Activated B cell treated with CpG ODN at 0.5 μM for 24 hours (primary cell): ENCODE measurements at regions of chr6 and their contacts with region 1.

Region 1: GRCh38 chr6:131602781-131603312 is 25.2 kb downstream of the MED23 start:
- DNase-seq: no peak
- ATAC-seq: no peak
- H3K4me3 Mint-ChIP-seq: no peak overlapping the region
- H3K27ac Mint-ChIP-seq: no peak overlapping the region
- H3K4me1 Mint-ChIP-seq: no peaks in the 10 kb centered on the region
- H3K27me3 Mint-ChIP-seq: no peaks in the 10 kb centered on the region
- CTCF ChIP-seq: no peak

Region 2: GRCh38 chr6:131368198-131368911 is 234.5 kb before region 1 on chr6:
- CTCF ChIA-PET with region 1: no interaction called
- POLR2A ChIA-PET with region 1: no interaction called
- intact Hi-C with region 1: no loop called
- DNase-seq: peak; percentile 19
- ATAC-seq: peak; percentile 25
- H3K4me3 Mint-ChIP-seq: peak overlapping the region; percentile 72
- H3K27ac Mint-ChIP-seq: peak overlapping the region; percentile 85
- H3K4me1 Mint-ChIP-seq: peaks cover 45% of the 10 kb centered on the region
- H3K27me3 Mint-ChIP-seq: no peaks in the 10 kb centered on the region
- CTCF ChIP-seq: no peak

Region 3: DNA sequence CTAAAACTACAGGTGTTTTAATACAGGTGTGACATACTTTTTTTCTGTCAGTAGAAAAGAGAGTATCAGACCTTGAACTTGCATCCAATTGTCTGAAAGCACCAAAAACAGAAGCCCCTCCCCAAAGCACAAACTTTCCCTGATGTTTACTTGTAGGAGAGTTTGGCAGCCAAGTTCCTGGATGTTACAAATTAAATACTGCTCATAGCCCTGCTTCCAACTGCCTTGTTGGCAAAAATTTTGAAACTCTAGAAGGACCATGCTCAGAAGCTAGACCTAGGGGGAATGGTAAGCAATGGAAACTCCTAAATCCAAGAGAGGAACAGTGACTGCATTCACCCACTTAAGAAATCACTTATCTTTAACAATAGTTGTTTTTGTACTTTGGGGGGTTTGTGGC is 46.9 kb before region 1 on chr6:
- CTCF ChIA-PET with region 1: no interaction called
- POLR2A ChIA-PET with region 1: interaction called, 10 read pairs
- intact Hi-C with region 1: no loop called
- DNase-seq: no peak
- ATAC-seq: no peak
- H3K4me3 Mint-ChIP-seq: no peak overlapping the region
- H3K27ac Mint-ChIP-seq: no peak overlapping the region
- H3K4me1 Mint-ChIP-seq: no peaks in the 10 kb centered on the region
- H3K27me3 Mint-ChIP-seq: peaks cover 9% of the 10 kb centered on the region
- CTCF ChIP-seq: no peak

Region 4: DNA sequence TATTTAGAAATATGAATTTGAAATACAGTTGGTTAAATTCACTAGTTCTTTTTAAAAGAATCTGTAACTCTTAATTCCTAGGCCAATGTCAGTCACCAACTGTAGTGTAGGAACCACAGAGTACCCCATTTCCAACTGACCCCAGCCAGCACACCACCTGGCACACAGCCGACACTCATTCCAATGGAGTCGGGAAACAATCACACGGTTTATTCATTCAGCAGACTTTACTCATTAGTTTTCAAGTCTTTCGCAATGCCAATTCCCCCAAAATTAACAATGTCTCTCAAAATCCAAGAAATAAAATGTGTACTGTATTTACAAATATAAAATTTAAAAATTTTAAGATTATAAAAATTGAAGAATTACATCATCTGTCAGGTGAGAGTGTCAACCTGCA is 16.3 kb before region 1 on chr6:
- CTCF ChIA-PET with region 1: interaction called, 3 read pairs
- POLR2A ChIA-PET with region 1: no interaction called
- intact Hi-C with region 1: loop called (anchors 2 kb)
- DNase-seq: no peak
- ATAC-seq: no peak
- H3K4me3 Mint-ChIP-seq: no peak overlapping the region
- H3K27ac Mint-ChIP-seq: no peak overlapping the region
- H3K4me1 Mint-ChIP-seq: no peaks in the 10 kb centered on the region
- H3K27me3 Mint-ChIP-seq: no peaks in the 10 kb centered on the region
- CTCF ChIP-seq: no peak